GM10248 (cell line): ENCODE measurements at regions of chr5 and their contacts with region 1.

Region 1: GRCh38 chr5:62450259-62450658 is 37.7 kb downstream of the IPO11 start:
- DNase-seq: no peak
- CTCF ChIP-seq: no peak

Region 2: GRCh38 chr5:62460578-62460983 is 10.3 kb after region 1 on chr5:
- CTCF ChIA-PET with region 1: interaction called, 11 read pairs
- POLR2A ChIA-PET with region 1: no interaction called
- DNase-seq: peak; percentile 40
- CTCF ChIP-seq: peak; percentile 65

Region 3: DNA sequence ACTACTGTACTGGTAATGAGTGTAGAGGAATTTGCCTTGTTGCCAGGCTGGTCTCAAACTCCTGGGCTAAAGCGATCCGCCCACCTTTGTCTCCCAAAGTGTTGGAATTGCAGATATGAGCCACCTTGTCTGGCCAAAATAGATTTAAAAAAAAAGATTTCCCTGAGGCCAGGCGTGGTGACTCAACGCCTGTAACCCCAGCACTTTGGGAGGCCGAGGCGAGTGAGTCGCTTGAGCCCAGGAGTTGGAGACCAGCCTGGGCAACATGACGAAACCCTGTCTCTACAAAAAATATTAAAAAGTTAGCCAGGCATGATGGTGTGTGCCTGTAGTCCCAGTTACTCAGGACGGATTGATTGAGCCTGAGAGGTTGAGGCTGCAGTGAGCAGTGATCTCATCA is 24.8 kb after region 1 on chr5:
- CTCF ChIA-PET with region 1: no interaction called
- POLR2A ChIA-PET with region 1: no interaction called
- DNase-seq: no peak
- CTCF ChIP-seq: no peak